ENCODE measurements at regions of chr3 and their contacts with region 1.

Region 1: DNA sequence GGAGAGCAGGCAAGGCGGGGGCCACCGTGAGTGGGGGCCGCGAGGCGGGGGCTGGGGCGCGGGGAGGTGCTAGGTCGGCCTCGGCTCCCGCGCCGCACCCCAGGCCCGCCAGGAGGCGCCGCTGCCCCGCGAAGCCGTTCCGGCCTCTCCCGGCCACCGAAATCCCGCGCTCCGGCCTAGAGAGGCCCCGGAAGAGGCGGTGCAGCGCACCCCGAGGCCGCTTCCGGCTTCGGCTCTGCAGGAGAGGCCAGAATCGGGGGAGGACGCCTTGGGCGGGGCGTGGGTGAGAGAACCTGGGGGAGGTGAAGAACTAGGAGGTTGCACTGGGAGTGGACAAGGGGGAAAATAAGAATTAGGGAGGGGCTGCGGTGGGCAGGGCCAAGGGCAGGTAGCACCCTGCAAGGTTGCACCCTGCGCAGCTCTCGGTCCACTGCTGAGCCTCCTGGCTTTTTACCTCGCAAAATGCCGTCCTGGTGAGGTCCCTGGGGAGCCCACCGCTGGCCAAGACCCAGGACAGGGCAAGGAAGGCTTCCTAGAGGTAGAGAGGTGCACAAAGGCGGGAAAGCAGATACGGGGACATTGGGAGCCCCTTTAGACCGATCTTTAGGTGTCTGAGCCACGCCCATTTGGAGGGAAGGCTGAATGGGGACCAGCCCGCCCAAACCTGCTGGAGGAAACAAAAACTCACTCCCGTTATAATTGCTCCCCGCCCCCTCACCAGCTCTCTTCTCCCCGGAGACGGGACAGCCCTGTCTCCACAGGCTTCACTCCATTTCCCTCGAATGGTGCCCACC is 8.4 kb upstream of the GNAI2 start:
- DNase-seq: peak; percentile 92
- H3K4me3 Mint-ChIP-seq: peak overlapping the region; percentile 96
- H3K27ac Mint-ChIP-seq: peak overlapping the region; percentile 91
- H3K4me1 Mint-ChIP-seq: peaks cover 18% of the 10 kb centered on the region
- H3K27me3 Mint-ChIP-seq: no peaks in the 10 kb centered on the region

Region 2: GRCh38 chr3:49802719-49803464 is 424.7 kb before region 1 on chr3 and contains the start of gene INKA1:
- CTCF ChIA-PET with region 1: no interaction called
- intact Hi-C with region 1: loop called (anchors 1 kb)
- DNase-seq: peak; percentile 93
- H3K4me3 Mint-ChIP-seq: peak within 1 kb of the TSS; percentile 82
- H3K27ac Mint-ChIP-seq: peak within 1 kb of the TSS; percentile 54
- H3K4me1 Mint-ChIP-seq: peaks cover 41% of the 10 kb centered on the region
- H3K27me3 Mint-ChIP-seq: peaks cover 2% of the 10 kb centered on the region
- total RNA-seq, gene INKA1: 0.33 to 0.37 TPM

Region 3: DNA sequence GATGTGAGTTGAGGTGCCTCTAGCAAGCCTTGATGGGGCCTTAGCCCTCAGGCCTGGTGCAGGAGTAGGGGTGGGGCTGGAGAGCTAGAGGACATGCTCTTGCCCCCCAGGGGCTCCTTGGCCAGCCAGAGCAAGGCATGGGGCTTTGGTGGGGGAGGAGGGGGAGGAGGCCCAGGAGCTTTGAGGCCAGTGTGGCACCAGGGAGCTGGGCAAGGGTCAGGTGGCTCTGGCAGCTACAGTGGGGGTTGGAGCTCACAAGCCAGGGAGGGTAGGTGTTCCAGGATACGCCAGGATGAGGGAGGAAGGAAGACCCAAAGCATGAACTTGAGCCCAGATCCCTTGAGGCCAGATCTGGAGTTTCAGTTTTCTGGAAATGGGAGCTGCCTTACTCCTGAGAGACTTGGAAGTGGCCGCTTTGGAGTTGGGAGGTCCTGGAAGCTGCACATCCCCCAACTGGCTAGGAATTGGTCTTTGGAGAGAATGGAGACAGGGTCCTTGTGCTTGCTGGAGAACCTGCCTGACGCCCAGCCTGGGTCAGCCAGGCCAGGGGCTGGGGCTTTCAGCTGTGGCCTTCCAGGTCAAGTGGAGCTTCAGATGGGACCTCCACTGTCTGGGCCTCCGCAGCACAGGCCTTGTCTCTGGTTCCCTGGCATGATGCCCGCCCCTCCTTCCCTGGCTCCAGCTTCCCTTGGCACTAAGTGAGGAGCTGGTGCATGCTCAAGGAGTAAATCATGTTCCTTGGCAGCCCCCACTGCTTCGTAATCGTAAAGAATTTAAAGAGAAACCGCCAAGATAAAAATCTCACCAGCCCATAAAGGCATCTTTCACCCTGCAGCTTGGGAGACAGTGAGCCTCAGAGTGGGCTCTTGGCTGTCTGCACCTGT is 63.8 kb before region 1 on chr3:
- CTCF ChIA-PET with region 1: no interaction called
- intact Hi-C with region 1: no loop called
- DNase-seq: no peak
- H3K4me3 Mint-ChIP-seq: no peak overlapping the region
- H3K27ac Mint-ChIP-seq: no peak overlapping the region
- H3K4me1 Mint-ChIP-seq: no peaks in the 10 kb centered on the region
- H3K27me3 Mint-ChIP-seq: no peaks in the 10 kb centered on the region

Region 4: DNA sequence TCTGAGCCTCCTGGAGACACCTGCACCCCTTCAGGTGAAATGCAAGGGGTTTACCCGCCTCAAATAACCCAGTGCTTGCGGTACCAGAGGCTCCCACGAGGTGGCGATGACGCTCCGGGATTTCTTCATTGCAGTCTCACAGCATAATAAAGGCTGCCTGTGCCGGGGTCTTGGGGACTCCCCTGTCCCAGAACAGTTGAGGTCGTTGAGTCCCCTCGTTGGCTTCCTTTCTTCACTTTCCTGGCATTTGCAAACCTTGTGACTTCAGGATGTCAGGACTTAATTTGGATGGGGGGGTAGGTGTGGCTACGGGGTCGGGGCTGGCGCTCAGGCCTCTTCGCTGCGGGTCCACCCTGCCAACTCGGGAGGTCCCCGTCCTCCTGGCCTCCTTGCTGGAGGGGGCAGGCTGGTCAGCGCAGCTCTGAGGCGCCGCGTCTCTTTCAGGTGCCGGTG is 34.9 kb before region 1 on chr3:
- CTCF ChIA-PET with region 1: interaction called, 151 read pairs
- intact Hi-C with region 1: loop called (anchors 1 kb)
- DNase-seq: peak; percentile 90
- H3K4me3 Mint-ChIP-seq: no peak overlapping the region
- H3K27ac Mint-ChIP-seq: no peak overlapping the region
- H3K4me1 Mint-ChIP-seq: peaks cover 15% of the 10 kb centered on the region
- H3K27me3 Mint-ChIP-seq: peaks cover 8% of the 10 kb centered on the region

Region 5: GRCh38 chr3:50251220-50251619 is 23.6 kb after region 1 on chr3:
- CTCF ChIA-PET with region 1: interaction called, 119 read pairs
- intact Hi-C with region 1: loop called (anchors 1 kb)
- DNase-seq: peak; percentile 31
- H3K4me3 Mint-ChIP-seq: no peak overlapping the region
- H3K27ac Mint-ChIP-seq: peak overlapping the region; percentile 66
- H3K4me1 Mint-ChIP-seq: peaks cover 41% of the 10 kb centered on the region
- H3K27me3 Mint-ChIP-seq: no peaks in the 10 kb centered on the region

Region 6: GRCh38 chr3:50272911-50273693 is 45.5 kb after region 1 on chr3:
- CTCF ChIA-PET with region 1: interaction called, 18 read pairs
- intact Hi-C with region 1: loop called (anchors 1 kb)
- DNase-seq: peak; percentile 93
- H3K4me3 Mint-ChIP-seq: peak overlapping the region; percentile 39
- H3K27ac Mint-ChIP-seq: no peak overlapping the region
- H3K4me1 Mint-ChIP-seq: peaks cover 31% of the 10 kb centered on the region
- H3K27me3 Mint-ChIP-seq: peaks cover 34% of the 10 kb centered on the region

Region 7: GRCh38 chr3:50442945-50443579 is 215.5 kb after region 1 on chr3:
- CTCF ChIA-PET with region 1: no interaction called
- intact Hi-C with region 1: no loop called
- DNase-seq: no peak
- H3K4me3 Mint-ChIP-seq: no peak overlapping the region
- H3K27ac Mint-ChIP-seq: no peak overlapping the region
- H3K4me1 Mint-ChIP-seq: no peaks in the 10 kb centered on the region
- H3K27me3 Mint-ChIP-seq: no peaks in the 10 kb centered on the region

Measured in activated naive CD4-positive, alpha-beta T cell treated with anti-CD3 and anti-CD28 coated beads for 36 hours (primary cell).